HCT116 (cell line): ENCODE measurements at regions of chr9 and their contacts with region 1.

Region 1: GRCh38 chr9:132406554-132407122 is at the start of gene TTF1:
- DNase-seq: peak; percentile 83
- ATAC-seq: peak; percentile 71
- H3K4me3 ChIP-seq: peak within 1 kb of the TSS; percentile 92 to 94
- H3K27ac ChIP-seq: peak within 1 kb of the TSS; percentile 34; the same call in 1 of the 2 replicates
- H3K4me1 ChIP-seq: peaks cover 22 to 36% of the 10 kb centered on the region in 2 experiments
- H3K27me3 ChIP-seq: no peaks in the 10 kb centered on the region
- CTCF ChIP-seq: no peak
- POLR2A ChIP-seq: no peak
- RAD21 ChIP-seq: no peak
- total RNA-seq, gene TTF1: 14.5 TPM

Region 2: GRCh38 chr9:131567910-131568309 is 838.7 kb before region 1 on chr9:
- CTCF ChIA-PET with region 1: no interaction called
- POLR2A ChIA-PET with region 1: no interaction called
- RAD21 ChIA-PET with region 1: no interaction called
- intact Hi-C with region 1: no loop called
- DNase-seq: no peak
- ATAC-seq: no peak
- H3K4me3 ChIP-seq: no peak overlapping the region
- H3K27ac ChIP-seq: no peak overlapping the region
- H3K4me1 ChIP-seq: no peaks in the 10 kb centered on the region
- H3K27me3 ChIP-seq: no peaks in the 10 kb centered on the region
- CTCF ChIP-seq: no peak
- POLR2A ChIP-seq: no peak
- RAD21 ChIP-seq: no peak

Region 3: GRCh38 chr9:132354637-132355355 is 51.8 kb before region 1 on chr9 and contains the start of gene SETX:
- CTCF ChIA-PET with region 1: no interaction called
- POLR2A ChIA-PET with region 1: no interaction called
- RAD21 ChIA-PET with region 1: no interaction called
- intact Hi-C with region 1: loop called (anchors 2 kb)
- DNase-seq: peak; percentile 95
- ATAC-seq: peak; percentile 93
- H3K4me3 ChIP-seq: peak within 1 kb of the TSS; percentile 84 to 91
- H3K27ac ChIP-seq: peak within 1 kb of the TSS; percentile 96
- H3K4me1 ChIP-seq: peaks cover 11 to 21% of the 10 kb centered on the region in 2 experiments; a peak in 3 of 4 replicates
- H3K27me3 ChIP-seq: no peaks in the 10 kb centered on the region
- CTCF ChIP-seq: no peak
- POLR2A ChIP-seq: peak; percentile 13
- RAD21 ChIP-seq: no peak
- total RNA-seq, gene SETX: 38.5 TPM

Region 4: GRCh38 chr9:132424857-132425686 is 18.4 kb after region 1 on chr9:
- CTCF ChIA-PET with region 1: no interaction called
- POLR2A ChIA-PET with region 1: no interaction called
- RAD21 ChIA-PET with region 1: no interaction called
- intact Hi-C with region 1: no loop called
- DNase-seq: no peak
- ATAC-seq: no peak
- H3K4me3 ChIP-seq: no peak overlapping the region
- H3K27ac ChIP-seq: no peak overlapping the region
- H3K4me1 ChIP-seq: no peaks in the 10 kb centered on the region
- H3K27me3 ChIP-seq: no peaks in the 10 kb centered on the region; the same call in 1 of the 2 replicates
- CTCF ChIP-seq: no peak
- POLR2A ChIP-seq: no peak
- RAD21 ChIP-seq: no peak

Region 5: GRCh38 chr9:132575005-132575609 is 168.5 kb after region 1 on chr9:
- CTCF ChIA-PET with region 1: interaction called, 5 read pairs
- POLR2A ChIA-PET with region 1: no interaction called
- RAD21 ChIA-PET with region 1: no interaction called
- intact Hi-C with region 1: loop called (anchors 1 kb)
- DNase-seq: peak; percentile 62
- ATAC-seq: peak; percentile 96
- H3K4me3 ChIP-seq: no peak overlapping the region
- H3K27ac ChIP-seq: no peak overlapping the region
- H3K4me1 ChIP-seq: peaks cover 0 to 6% of the 10 kb centered on the region in 2 experiments; a peak in 2 of 4 replicates
- H3K27me3 ChIP-seq: peaks cover 20% of the 10 kb centered on the region
- CTCF ChIP-seq: peak; percentile 78 to 90 (median 86)
- POLR2A ChIP-seq: no peak
- RAD21 ChIP-seq: peak; percentile 96

Region 6: GRCh38 chr9:132800038-132800648 is 393.5 kb after region 1 on chr9:
- CTCF ChIA-PET with region 1: interaction called, 4 read pairs
- POLR2A ChIA-PET with region 1: no interaction called
- RAD21 ChIA-PET with region 1: no interaction called
- intact Hi-C with region 1: loop called (anchors 1 kb)
- DNase-seq: peak; percentile 60
- ATAC-seq: peak; percentile 86
- H3K4me3 ChIP-seq: no peak overlapping the region
- H3K27ac ChIP-seq: no peak overlapping the region
- H3K4me1 ChIP-seq: peaks cover 3 to 19% of the 10 kb centered on the region in 2 experiments; a peak in 2 of 4 replicates
- H3K27me3 ChIP-seq: no peaks in the 10 kb centered on the region
- CTCF ChIP-seq: peak; percentile 82 to 93 (median 87)
- POLR2A ChIP-seq: no peak
- RAD21 ChIP-seq: peak; percentile 94

Region 7: GRCh38 chr9:133023117-133023890 is 616.7 kb after region 1 on chr9:
- CTCF ChIA-PET with region 1: no interaction called
- POLR2A ChIA-PET with region 1: no interaction called
- RAD21 ChIA-PET with region 1: no interaction called
- intact Hi-C with region 1: loop called (anchors 1 kb)
- DNase-seq: no peak
- ATAC-seq: no peak
- H3K4me3 ChIP-seq: no peak overlapping the region
- H3K27ac ChIP-seq: no peak overlapping the region
- H3K4me1 ChIP-seq: peaks cover 0 to 3% of the 10 kb centered on the region in 2 experiments; a peak in 2 of 4 replicates
- H3K27me3 ChIP-seq: no peaks in the 10 kb centered on the region
- CTCF ChIP-seq: no peak
- POLR2A ChIP-seq: no peak
- RAD21 ChIP-seq: no peak